IMR-90 (cell line): ENCODE measurements at regions of chr15 and their contacts with region 1.

Region 1: GRCh38 chr15:40694688-40695468 is at the start of gene RAD51:
- DNase-seq: peak; percentile 93
- ATAC-seq: peak; percentile 97
- H3K4me3 ChIP-seq: peak within 1 kb of the TSS; percentile 80
- H3K27ac ChIP-seq: peak within 1 kb of the TSS; percentile 93
- H3K4me1 ChIP-seq: peaks cover 4% of the 10 kb centered on the region; the same call in 1 of the 2 replicates
- H3K27me3 ChIP-seq: no peaks in the 10 kb centered on the region
- CTCF ChIP-seq: no peak
- POLR2A ChIP-seq: peak; percentile 80
- RAD21 ChIP-seq: no peak
- total RNA-seq, gene RAD51: 7.8 and 8.4 TPM in 2 replicates

Region 2: GRCh38 chr15:40405501-40406381 is 289.1 kb before region 1 on chr15 and contains the start of gene IVD:
- CTCF ChIA-PET with region 1: no interaction called
- POLR2A ChIA-PET with region 1: no interaction called
- dilution Hi-C with region 1: no loop called
- in situ Hi-C with region 1: no loop called
- intact Hi-C with region 1: no loop called
- DNase-seq: peak; percentile 96
- ATAC-seq: peak; percentile 100
- H3K4me3 ChIP-seq: peak within 1 kb of the TSS; percentile 71
- H3K27ac ChIP-seq: peak within 1 kb of the TSS; percentile 71
- H3K4me1 ChIP-seq: peaks cover 3% of the 10 kb centered on the region
- H3K27me3 ChIP-seq: no peaks in the 10 kb centered on the region
- CTCF ChIP-seq: no peak
- POLR2A ChIP-seq: peak; percentile 59; the same call in 1 of the 2 replicates
- RAD21 ChIP-seq: no peak
- total RNA-seq, gene IVD: 27.5 and 31.7 TPM in 2 replicates

Region 3: DNA sequence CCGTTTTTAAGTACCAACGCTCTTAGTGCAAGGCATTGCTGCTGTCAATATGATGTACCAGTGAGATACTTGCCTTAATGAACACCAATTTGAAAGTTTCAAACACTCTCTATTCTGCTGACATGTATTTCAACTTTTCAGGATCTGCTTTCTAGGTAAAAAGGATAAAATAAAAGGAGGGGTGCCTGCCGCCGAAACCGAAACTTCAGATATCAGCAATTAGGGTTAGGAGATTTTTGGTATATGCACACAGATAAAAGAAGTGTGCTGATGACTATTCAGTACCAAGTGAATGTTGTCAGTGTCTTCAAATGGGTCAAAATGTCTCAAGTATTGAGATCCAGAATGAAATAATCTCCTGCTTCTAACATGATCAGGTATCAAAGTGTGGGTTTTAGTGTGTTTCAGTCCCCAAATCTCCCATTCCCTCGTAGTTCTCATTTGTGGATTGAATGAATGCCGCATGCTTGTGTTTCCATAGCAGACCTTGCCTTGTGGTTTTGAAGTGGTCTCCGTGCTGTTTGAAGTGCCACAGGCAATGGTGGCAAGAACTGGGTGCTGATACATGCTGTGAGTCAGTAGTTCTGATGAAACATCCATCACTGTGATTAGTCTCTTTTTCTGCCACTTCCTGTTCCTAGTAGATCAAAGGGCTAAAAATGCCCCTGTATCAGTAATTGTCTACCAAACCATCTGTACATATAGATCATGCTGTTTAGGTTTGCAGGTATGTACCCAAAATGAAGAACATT is 201.6 kb before region 1 on chr15:
- CTCF ChIA-PET with region 1: no interaction called
- POLR2A ChIA-PET with region 1: no interaction called
- dilution Hi-C with region 1: no loop called
- in situ Hi-C with region 1: no loop called
- intact Hi-C with region 1: no loop called
- DNase-seq: no peak
- ATAC-seq: no peak
- H3K4me3 ChIP-seq: no peak overlapping the region
- H3K27ac ChIP-seq: no peak overlapping the region
- H3K4me1 ChIP-seq: no peaks in the 10 kb centered on the region
- H3K27me3 ChIP-seq: peaks cover 51% of the 10 kb centered on the region
- CTCF ChIP-seq: no peak
- POLR2A ChIP-seq: no peak
- RAD21 ChIP-seq: no peak

Region 4: DNA sequence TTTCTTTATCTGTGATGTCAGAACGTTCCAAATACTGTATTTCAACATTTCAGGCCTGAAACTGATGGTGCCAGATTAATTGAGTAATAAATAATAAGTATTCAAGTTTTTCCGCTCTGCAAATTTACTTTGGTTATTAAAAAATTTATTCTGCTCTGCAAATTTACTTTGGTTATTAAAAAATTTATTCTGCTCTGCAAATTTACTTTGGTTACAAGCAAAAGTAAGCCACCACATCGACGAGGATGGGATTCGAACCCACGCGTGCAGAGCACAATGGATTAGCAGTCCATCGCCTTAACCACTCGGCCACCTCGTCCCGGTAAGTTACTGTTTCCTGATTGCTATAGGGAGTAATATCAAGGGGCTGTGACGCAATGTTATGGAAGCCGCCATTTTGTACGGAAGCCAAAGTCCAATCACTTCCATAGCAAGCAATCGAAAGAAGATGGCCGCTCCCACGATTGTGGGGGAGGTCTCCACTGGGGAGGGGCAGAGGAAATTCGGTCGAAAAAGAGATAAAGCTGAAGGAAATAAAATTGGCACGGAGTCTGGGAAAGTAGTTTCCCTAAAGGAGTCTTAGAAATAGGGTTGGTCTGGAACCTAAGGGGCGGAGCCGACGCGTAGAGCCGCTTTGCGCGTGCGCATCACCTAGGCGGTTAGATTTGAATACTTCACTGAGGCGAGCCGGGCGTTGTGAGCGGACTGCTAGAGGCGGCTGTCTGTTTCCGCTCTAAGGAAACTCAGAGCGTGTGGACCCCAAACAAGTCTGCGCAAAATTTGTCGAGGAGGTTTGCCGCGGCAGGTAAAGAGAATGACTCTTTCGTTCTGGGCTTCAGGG is 101.1 kb before region 1 on chr15 and contains the start of gene KNL1:
- CTCF ChIA-PET with region 1: interaction called, 4 read pairs
- POLR2A ChIA-PET with region 1: no interaction called
- dilution Hi-C with region 1: no loop called
- in situ Hi-C with region 1: no loop called
- intact Hi-C with region 1: loop called (anchors 2 kb)
- DNase-seq: peak; percentile 90
- ATAC-seq: peak; percentile 89
- H3K4me3 ChIP-seq: peak within 1 kb of the TSS; percentile 52
- H3K27ac ChIP-seq: peak within 1 kb of the TSS; percentile 83
- H3K4me1 ChIP-seq: no peaks in the 10 kb centered on the region
- H3K27me3 ChIP-seq: no peaks in the 10 kb centered on the region
- CTCF ChIP-seq: no peak
- POLR2A ChIP-seq: peak; percentile 47
- RAD21 ChIP-seq: no peak
- total RNA-seq, gene KNL1: 25.1 and 32.5 TPM in 2 replicates

Region 5: DNA sequence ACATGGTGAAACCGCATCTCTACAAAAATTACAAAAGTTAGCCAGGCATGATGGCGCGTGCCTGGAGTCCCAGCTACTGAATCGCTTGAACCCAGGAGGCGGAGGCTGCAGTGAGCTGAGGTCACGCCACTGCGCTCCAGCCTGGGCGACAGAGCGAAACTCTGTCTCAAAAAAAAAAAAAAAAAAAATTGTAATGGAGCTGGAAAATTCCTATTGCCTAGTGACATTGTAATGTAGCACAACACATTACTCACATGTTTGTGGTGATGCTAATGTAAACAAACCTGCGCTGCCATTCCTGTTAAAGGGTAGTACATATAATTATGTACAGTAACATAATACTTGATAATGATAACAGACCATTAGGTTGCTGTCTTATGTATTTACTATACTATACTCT is 61.7 kb before region 1 on chr15:
- CTCF ChIA-PET with region 1: no interaction called
- POLR2A ChIA-PET with region 1: interaction called, 12 read pairs
- dilution Hi-C with region 1: no loop called
- in situ Hi-C with region 1: no loop called
- intact Hi-C with region 1: no loop called
- DNase-seq: peak; percentile 64
- ATAC-seq: peak; percentile 81
- H3K4me3 ChIP-seq: no peak overlapping the region
- H3K27ac ChIP-seq: no peak overlapping the region
- H3K4me1 ChIP-seq: 0 out of 2 replicates have a peak, but pooled peaks cover 5% of the 10 kb centered on the region
- H3K27me3 ChIP-seq: no peaks in the 10 kb centered on the region
- CTCF ChIP-seq: no peak
- POLR2A ChIP-seq: no peak
- RAD21 ChIP-seq: no peak

Region 6: GRCh38 chr15:40684381-40684780 is 10.5 kb before region 1 on chr15:
- CTCF ChIA-PET with region 1: interaction called, 3 read pairs
- POLR2A ChIA-PET with region 1: interaction called, 10 read pairs
- dilution Hi-C with region 1: no loop called
- in situ Hi-C with region 1: no loop called
- intact Hi-C with region 1: no loop called
- DNase-seq: no peak
- ATAC-seq: no peak
- H3K4me3 ChIP-seq: no peak overlapping the region
- H3K27ac ChIP-seq: no peak overlapping the region
- H3K4me1 ChIP-seq: no peaks in the 10 kb centered on the region
- H3K27me3 ChIP-seq: no peaks in the 10 kb centered on the region
- CTCF ChIP-seq: no peak
- POLR2A ChIP-seq: no peak
- RAD21 ChIP-seq: no peak

Region 7: GRCh38 chr15:40769274-40770146 is 74.6 kb after region 1 on chr15 and contains the start of gene C15orf62:
- CTCF ChIA-PET with region 1: no interaction called
- POLR2A ChIA-PET with region 1: no interaction called
- dilution Hi-C with region 1: no loop called
- in situ Hi-C with region 1: no loop called
- intact Hi-C with region 1: no loop called
- DNase-seq: peak; percentile 31
- ATAC-seq: no peak
- H3K4me3 ChIP-seq: no peak within 1 kb of the TSS
- H3K27ac ChIP-seq: no peak within 1 kb of the TSS
- H3K4me1 ChIP-seq: peaks cover 18% of the 10 kb centered on the region
- H3K27me3 ChIP-seq: no peaks in the 10 kb centered on the region
- CTCF ChIP-seq: no peak
- POLR2A ChIP-seq: no peak
- RAD21 ChIP-seq: no peak
- total RNA-seq, gene C15orf62: under 0.01 TPM in 1 of 2 replicates, not detected in the other